ENCODE measurements at regions of chrX and their contacts with region 1.

Region 1: GRCh38 chrX:131841496-131842410 is 181.3 kb upstream of the STK26 start:
- DNase-seq: no peak
- ATAC-seq: peak; percentile 97
- H3K4me3 ChIP-seq: peak overlapping the region; percentile 25 to 58
- H3K27ac ChIP-seq: no peak overlapping the region
- H3K4me1 ChIP-seq: no peaks in the 10 kb centered on the region
- H3K27me3 ChIP-seq: no peaks in the 10 kb centered on the region
- CTCF ChIP-seq: peak; percentile 92

Region 2: GRCh38 chrX:132219343-132219768 is 377.6 kb after region 1 on chrX and contains the start of gene RAP2C:
- CTCF ChIA-PET with region 1: interaction called, 10 read pairs
- POLR2A ChIA-PET with region 1: no interaction called
- in situ Hi-C with region 1: no loop called
- intact Hi-C with region 1: loop called (anchors 5 kb)
- DNase-seq: peak; percentile 71
- ATAC-seq: peak; percentile 78
- H3K4me3 ChIP-seq: peak within 1 kb of the TSS; percentile 79 to 90
- H3K27ac ChIP-seq: peak within 1 kb of the TSS; percentile 95
- H3K4me1 ChIP-seq: peaks cover 16% of the 10 kb centered on the region
- H3K27me3 ChIP-seq: no peaks in the 10 kb centered on the region
- CTCF ChIP-seq: peak; percentile 82
- total RNA-seq, gene RAP2C: 36.2 TPM

Region 3: GRCh38 chrX:132615391-132616131 is 773.8 kb after region 1 on chrX:
- CTCF ChIA-PET with region 1: interaction called, 4 read pairs
- POLR2A ChIA-PET with region 1: no interaction called
- in situ Hi-C with region 1: no loop called
- intact Hi-C with region 1: loop called (anchors 5 kb)
- DNase-seq: no peak
- ATAC-seq: peak; percentile 68; the same call in 1 of the 2 replicates
- H3K4me3 ChIP-seq: no peak overlapping the region
- H3K27ac ChIP-seq: no peak overlapping the region
- H3K4me1 ChIP-seq: no peaks in the 10 kb centered on the region
- H3K27me3 ChIP-seq: peaks cover 2% of the 10 kb centered on the region; the same call in 1 of the 2 replicates
- CTCF ChIP-seq: peak; percentile 66